Mammary epithelial cell (primary cell): ENCODE measurements at regions of chr1 and their contacts with region 1.

Region 1: DNA sequence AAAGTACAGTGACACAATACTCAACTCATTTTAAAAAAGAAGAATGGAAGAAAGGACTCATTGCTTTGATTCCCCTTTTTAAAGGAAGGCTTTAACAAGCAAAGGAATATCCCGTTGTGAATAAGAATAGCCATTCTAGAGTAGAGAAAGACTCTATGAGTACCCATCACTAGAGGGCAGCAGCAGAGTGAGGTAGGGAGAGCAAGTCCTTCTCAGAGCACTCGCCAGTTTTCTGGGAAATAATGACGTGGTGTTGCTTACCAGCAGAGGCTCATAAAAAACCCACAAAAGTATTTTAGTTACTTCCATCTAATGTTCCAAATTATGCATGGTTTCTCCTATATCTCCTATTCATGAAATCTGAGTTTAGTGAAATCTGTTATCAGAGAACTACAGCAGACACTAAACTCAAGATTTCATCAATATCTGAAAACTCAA is 74.6 kb downstream of the USP24 start:
- DNase-seq: peak; percentile 72
- H3K4me3 ChIP-seq: no peak overlapping the region
- H3K27ac ChIP-seq: no peak overlapping the region
- H3K4me1 ChIP-seq: no peaks in the 10 kb centered on the region
- H3K27me3 ChIP-seq: no peaks in the 10 kb centered on the region
- CTCF ChIP-seq: peak; percentile 77 to 89

Region 2: DNA sequence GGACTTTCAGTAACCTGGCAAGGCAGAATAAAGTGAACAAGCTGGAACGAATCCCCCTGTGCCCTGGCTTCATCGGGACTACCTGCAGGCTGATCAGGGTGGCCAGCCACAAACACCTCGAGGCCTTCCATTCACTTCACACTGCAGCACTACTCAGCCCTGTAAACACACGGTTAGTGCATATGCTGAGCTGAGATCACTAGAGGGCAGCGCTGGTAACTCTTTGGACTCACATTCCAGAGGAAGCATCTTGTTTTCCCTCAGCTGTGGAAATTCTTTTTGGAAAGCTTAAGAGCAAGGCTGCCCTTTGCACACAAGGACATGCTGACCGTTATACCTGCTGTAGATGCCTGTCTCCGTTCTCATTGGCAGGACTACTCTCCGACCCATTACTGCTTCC is 69.1 kb before region 1 on chr1:
- CTCF ChIA-PET with region 1: no interaction called
- dilution Hi-C with region 1: no loop called
- in situ Hi-C with region 1: no loop called
- intact Hi-C with region 1: no loop called
- DNase-seq: peak; percentile 46
- H3K4me3 ChIP-seq: no peak overlapping the region
- H3K27ac ChIP-seq: no peak overlapping the region
- H3K4me1 ChIP-seq: no peaks in the 10 kb centered on the region
- H3K27me3 ChIP-seq: no peaks in the 10 kb centered on the region
- CTCF ChIP-seq: peak; percentile 27 to 44

Region 3: DNA sequence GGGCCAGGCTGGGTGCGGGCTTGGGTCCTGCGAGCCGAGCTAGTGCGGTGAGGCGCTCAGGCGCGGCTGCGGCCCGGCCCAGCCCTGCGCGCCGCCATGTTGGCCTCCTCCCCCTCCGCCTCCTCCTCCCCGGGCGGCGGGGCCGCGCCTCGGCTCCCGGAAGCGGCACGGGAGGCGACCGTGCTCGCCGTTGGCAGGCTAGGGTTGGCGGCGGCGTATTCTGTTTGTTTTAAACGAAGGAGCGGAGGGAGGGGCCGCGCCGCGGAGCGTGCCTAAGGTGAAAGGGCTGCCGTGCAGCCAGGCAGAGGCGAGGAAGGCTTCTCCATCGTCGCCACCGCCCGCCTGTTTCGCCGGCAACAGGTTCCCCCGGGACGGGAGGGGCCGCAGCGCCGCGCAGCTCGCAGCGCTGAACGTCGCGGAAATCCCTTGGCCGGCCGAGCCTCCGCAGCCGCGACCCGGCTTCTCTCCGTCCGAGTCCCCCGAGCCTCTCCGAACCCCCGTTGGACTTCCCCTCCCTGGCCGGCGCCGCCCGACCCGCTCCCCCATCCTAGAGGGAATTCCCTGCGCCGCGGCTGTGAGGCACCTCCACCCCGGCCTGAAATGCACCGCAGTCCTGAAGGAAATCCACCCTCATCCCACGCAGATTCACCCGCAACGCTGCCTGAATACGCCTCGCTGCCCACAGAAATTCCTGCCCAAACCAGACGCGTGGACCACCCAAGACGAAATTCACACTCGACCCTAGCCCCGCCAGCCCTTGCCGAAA is 74.9 kb after region 1 on chr1 and contains the start of gene USP24:
- CTCF ChIA-PET with region 1: no interaction called
- dilution Hi-C with region 1: no loop called
- in situ Hi-C with region 1: no loop called
- intact Hi-C with region 1: loop called (anchors 2 kb)
- DNase-seq: peak; percentile 76
- H3K4me3 ChIP-seq: peak within 1 kb of the TSS; percentile 64 to 97 (median 96)
- H3K27ac ChIP-seq: peak within 1 kb of the TSS; percentile 75
- H3K4me1 ChIP-seq: peaks cover 24% of the 10 kb centered on the region
- H3K27me3 ChIP-seq: no peaks in the 10 kb centered on the region
- CTCF ChIP-seq: no peak
- total RNA-seq, gene USP24: 37.7 to 41.6 TPM

Region 4: DNA sequence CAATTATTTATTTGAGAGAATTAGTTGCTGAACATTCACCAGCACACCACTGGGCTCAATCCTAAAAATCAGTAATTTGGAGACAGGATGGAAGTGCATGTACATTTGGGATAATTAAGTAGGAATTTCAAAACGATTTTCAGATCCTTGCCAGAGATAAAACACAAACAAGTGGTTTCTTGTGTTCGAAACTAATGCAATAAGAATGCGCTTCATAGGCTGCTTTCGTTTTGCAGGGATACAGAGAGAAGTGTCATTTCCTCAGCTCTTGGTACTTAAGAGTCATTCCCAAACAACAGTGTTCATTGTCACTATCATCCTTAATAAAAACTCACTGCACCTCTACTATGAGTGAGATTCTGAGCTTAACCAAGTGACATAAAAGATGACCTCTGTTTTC is 95.2 kb after region 1 on chr1:
- CTCF ChIA-PET with region 1: no interaction called
- dilution Hi-C with region 1: no loop called
- in situ Hi-C with region 1: no loop called
- intact Hi-C with region 1: no loop called
- DNase-seq: peak; percentile 80
- H3K4me3 ChIP-seq: peak overlapping the region in 2 of 3 experiments; percentile 15 to 34
- H3K27ac ChIP-seq: no peak overlapping the region
- H3K4me1 ChIP-seq: peaks cover 9% of the 10 kb centered on the region
- H3K27me3 ChIP-seq: no peaks in the 10 kb centered on the region
- CTCF ChIP-seq: no peak

Region 5: GRCh38 chr1:55337801-55338447 is 197.4 kb after region 1 on chr1:
- CTCF ChIA-PET with region 1: no interaction called
- dilution Hi-C with region 1: no loop called
- in situ Hi-C with region 1: no loop called
- intact Hi-C with region 1: loop called (anchors 1 kb)
- DNase-seq: peak; percentile 54
- H3K4me3 ChIP-seq: no peak overlapping the region
- H3K27ac ChIP-seq: no peak overlapping the region
- H3K4me1 ChIP-seq: no peaks in the 10 kb centered on the region
- H3K27me3 ChIP-seq: no peaks in the 10 kb centered on the region
- CTCF ChIP-seq: peak; percentile 58 to 73